Mammary epithelial cell (primary cell): ENCODE measurements at regions of chr16 and their contacts with region 1.

Region 1: DNA sequence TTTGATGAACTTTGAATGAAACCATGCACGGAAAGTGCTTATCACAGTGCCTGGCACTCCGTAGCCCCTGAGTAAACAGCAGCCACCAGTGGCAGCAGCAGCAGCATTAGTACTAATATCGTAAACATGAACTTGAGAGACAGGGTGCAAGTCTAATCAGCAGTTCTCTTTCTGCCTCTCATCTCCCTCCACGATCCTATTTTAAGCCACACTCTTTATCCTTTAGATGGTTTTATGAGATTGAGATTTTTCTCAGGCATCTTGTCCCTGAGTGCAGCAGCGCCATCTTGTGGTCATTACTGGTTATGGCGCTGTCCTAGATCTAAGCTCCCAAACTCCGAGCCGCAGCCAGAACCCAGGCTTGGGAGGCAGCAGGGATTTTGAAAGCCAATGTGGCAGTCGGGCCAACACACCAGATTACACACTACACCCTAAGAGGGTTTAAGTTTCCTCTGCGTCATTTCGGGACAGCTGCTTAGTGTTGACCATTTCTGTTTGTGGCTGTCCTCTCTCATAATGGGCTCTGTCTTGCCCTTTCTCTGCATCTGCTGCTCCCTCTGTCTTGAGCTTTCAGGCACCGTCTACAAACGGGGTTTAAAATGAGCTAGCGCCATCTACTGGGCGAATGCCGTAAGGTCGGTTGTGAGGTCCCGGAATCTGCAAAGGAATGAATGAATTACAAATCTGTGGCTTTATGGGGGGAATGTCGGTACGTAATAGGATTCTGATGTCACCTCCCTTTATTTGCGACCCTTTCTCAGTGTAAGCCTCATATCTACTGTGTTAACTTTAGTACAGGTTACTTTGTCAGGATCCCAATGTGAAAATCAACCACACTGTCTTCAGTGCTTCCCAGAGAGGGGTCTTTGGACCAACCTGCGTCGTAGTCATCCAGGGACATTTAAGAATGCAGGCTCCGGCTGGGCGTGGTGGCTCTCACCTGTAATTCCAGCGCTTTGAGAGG is 64.5 kb downstream of the CYLD start:
- DNase-seq: peak; percentile 79
- H3K4me3 ChIP-seq: peak overlapping the region; percentile 40 to 44 (median 43)
- H3K27ac ChIP-seq: no peak overlapping the region
- H3K4me1 ChIP-seq: no peaks in the 10 kb centered on the region
- H3K27me3 ChIP-seq: no peaks in the 10 kb centered on the region
- CTCF ChIP-seq: peak; percentile 81 to 86

Region 2: DNA sequence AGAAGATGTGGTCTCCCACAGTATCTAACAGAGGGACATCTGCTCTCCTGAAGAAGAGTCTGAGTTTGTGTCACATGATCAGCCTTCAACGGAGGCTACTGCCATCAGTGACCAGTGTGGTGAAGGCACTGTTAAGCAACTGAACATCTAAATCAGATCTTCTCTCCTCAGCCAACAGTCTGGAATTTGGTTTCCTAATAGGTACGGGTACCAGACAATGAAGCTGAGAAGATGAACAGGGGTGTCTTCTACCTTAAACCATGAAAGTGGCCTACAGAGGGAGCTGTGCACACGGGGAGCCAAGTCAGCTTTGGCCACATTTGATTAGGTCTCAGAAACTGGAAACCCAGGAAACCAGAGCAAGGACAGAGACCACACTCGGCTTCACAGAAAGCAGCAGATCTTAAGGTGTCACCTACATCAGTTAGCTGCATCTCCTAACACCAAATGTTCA is 479.4 kb before region 1 on chr16:
- CTCF ChIA-PET with region 1: no interaction called
- dilution Hi-C with region 1: no loop called
- in situ Hi-C with region 1: no loop called
- intact Hi-C with region 1: loop called (anchors 5 kb)
- DNase-seq: peak; percentile 46
- H3K4me3 ChIP-seq: no peak overlapping the region
- H3K27ac ChIP-seq: no peak overlapping the region
- H3K4me1 ChIP-seq: no peaks in the 10 kb centered on the region
- H3K27me3 ChIP-seq: no peaks in the 10 kb centered on the region
- CTCF ChIP-seq: peak; percentile 38 to 59

Region 3: DNA sequence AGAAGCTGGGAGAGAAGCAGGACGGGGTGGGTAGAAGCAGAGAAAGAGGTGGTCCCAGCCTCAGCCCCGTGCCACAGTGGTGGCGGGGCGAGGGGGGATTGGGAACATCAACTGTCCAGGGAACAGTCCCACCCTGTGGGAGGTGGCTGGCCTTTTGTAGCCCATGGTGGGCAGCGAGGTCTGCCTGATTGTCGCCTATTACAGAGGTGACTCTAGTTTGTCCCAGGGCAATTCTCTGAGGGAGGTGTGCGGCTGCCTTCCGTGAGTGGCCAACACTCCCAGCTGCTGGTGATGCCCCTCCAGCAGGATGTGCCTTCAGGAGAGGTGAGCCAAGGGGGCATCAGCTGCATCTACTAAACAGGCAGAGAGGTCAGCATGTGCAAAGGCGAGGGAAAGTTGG is 432.6 kb before region 1 on chr16:
- CTCF ChIA-PET with region 1: interaction called, 5 read pairs
- dilution Hi-C with region 1: no loop called
- in situ Hi-C with region 1: no loop called
- intact Hi-C with region 1: loop called (anchors 1 kb)
- DNase-seq: no peak
- H3K4me3 ChIP-seq: no peak overlapping the region
- H3K27ac ChIP-seq: no peak overlapping the region
- H3K4me1 ChIP-seq: peaks cover 9% of the 10 kb centered on the region
- H3K27me3 ChIP-seq: no peaks in the 10 kb centered on the region
- CTCF ChIP-seq: no peak

Region 4: GRCh38 chr16:50449755-50450154 is 356.6 kb before region 1 on chr16:
- CTCF ChIA-PET with region 1: no interaction called
- dilution Hi-C with region 1: no loop called
- in situ Hi-C with region 1: no loop called
- intact Hi-C with region 1: no loop called
- DNase-seq: no peak
- H3K4me3 ChIP-seq: no peak overlapping the region
- H3K27ac ChIP-seq: no peak overlapping the region
- H3K4me1 ChIP-seq: no peaks in the 10 kb centered on the region
- H3K27me3 ChIP-seq: no peaks in the 10 kb centered on the region
- CTCF ChIP-seq: no peak

Region 5: GRCh38 chr16:50671644-50672260 is 134.6 kb before region 1 on chr16:
- CTCF ChIA-PET with region 1: interaction called, 11 read pairs
- dilution Hi-C with region 1: no loop called
- in situ Hi-C with region 1: loop called in 1 of 2 experiments (anchors 5 kb)
- intact Hi-C with region 1: loop called (anchors 1 kb)
- DNase-seq: peak; percentile 26
- H3K4me3 ChIP-seq: no peak overlapping the region
- H3K27ac ChIP-seq: no peak overlapping the region
- H3K4me1 ChIP-seq: no peaks in the 10 kb centered on the region
- H3K27me3 ChIP-seq: no peaks in the 10 kb centered on the region
- CTCF ChIP-seq: peak; percentile 70 to 72

Region 6: GRCh38 chr16:50747207-50747956 is 59.0 kb before region 1 on chr16:
- CTCF ChIA-PET with region 1: interaction called, 4 read pairs
- dilution Hi-C with region 1: no loop called
- in situ Hi-C with region 1: no loop called
- intact Hi-C with region 1: loop called (anchors 1 kb)
- DNase-seq: peak; percentile 34
- H3K4me3 ChIP-seq: no peak overlapping the region
- H3K27ac ChIP-seq: no peak overlapping the region
- H3K4me1 ChIP-seq: peaks cover 22% of the 10 kb centered on the region
- H3K27me3 ChIP-seq: no peaks in the 10 kb centered on the region
- CTCF ChIP-seq: peak; percentile 23 to 45

Region 7: DNA sequence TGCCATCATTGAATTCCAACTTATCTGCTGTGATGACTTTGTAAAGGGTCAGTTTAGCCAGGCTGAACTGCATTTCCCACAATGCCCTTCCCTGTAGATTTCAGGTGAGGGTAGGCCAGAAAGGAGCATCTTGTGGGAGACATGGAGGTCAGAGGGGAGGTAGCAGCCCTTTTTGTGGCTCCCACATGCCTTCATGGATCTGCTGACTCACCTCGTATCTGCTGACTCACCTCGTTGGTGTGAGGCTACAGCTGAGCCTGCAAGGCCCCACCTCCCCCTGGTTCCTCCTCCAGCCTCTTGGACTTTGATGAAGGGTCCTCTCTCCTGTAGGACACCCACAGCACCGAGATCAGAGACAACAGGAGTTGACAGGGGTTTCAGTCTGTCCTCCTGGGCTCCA is 242.2 kb after region 1 on chr16:
- CTCF ChIA-PET with region 1: interaction called, 5 read pairs
- dilution Hi-C with region 1: no loop called
- in situ Hi-C with region 1: no loop called
- intact Hi-C with region 1: loop called (anchors 1 kb)
- DNase-seq: peak; percentile 24
- H3K4me3 ChIP-seq: no peak overlapping the region
- H3K27ac ChIP-seq: no peak overlapping the region
- H3K4me1 ChIP-seq: no peaks in the 10 kb centered on the region
- H3K27me3 ChIP-seq: no peaks in the 10 kb centered on the region
- CTCF ChIP-seq: no peak

Region 8: DNA sequence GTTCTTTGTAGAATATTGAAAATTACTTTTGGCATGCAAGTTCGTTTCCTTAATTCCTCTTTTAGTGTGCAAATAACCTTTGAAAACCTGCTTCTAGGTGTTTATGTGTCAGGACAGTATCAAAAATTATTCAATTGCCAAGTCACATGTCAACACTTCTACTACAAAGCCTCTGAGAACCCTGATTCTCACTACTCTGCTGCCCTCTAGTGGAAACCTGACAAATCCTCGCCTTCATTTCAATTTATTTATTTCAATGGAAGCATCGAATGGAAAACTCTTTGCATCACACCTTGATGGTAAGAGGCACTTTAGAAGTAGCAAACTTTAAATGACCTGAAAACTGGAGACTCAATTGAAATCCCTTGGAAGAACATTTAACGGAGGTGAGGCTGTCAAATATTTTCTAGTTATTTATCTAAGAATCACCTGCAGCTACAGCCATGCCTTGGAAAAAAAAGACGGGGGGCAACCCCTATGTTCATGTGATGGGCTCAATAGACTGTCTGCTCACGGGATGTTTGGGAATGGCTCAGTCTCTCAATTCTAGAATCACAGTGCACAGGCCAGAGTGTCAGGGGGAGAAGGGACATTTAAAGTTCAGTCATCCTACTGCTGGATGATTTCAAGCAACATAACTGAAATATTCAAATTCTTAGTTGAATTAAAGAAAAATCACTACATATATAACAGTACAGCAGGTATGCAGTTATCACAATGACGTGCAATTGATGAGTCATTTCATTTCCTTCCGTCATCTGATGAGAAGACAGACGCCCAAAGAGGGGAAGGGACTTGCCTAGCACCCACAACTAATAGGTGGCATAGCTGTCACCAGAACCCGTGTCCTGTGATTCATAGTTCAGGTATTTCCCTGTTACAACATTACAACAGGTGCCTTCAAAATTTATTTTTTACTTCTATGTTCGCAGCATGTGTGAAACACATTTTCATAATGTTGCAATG is 1176.6 kb after region 1 on chr16:
- CTCF ChIA-PET with region 1: interaction called, 3 read pairs
- dilution Hi-C with region 1: no loop called
- in situ Hi-C with region 1: no loop called
- intact Hi-C with region 1: loop called (anchors 1 kb)
- DNase-seq: peak; percentile 42
- H3K4me3 ChIP-seq: no peak overlapping the region
- H3K27ac ChIP-seq: no peak overlapping the region
- H3K4me1 ChIP-seq: no peaks in the 10 kb centered on the region
- H3K27me3 ChIP-seq: peaks cover 4% of the 10 kb centered on the region
- CTCF ChIP-seq: peak; percentile 69 to 79